Activated T-helper 1 cell treated with anti-CD3 and anti-CD28 coated beads, Interleukin-12 subunit alpha, Interleukin-12 subunit beta, Interleukin-2, Interleukin-4 antibody, amounts not matched to agents 30 ng/mL and 10 ng/mL and 1 ng/mL, durations not matched to agents 14 hours and 24 hours and 36 hours (primary cell): ENCODE measurements at regions of chr2 and their contacts with region 1.

Region 1: GRCh38 chr2:71510196-71510807 is 56.9 kb downstream of the DYSF start:
- DNase-seq: peak; percentile 48
- H3K4me3 Mint-ChIP-seq: no peak overlapping the region
- H3K27ac Mint-ChIP-seq: no peak overlapping the region
- H3K4me1 Mint-ChIP-seq: peaks cover 5% of the 10 kb centered on the region
- H3K27me3 Mint-ChIP-seq: peaks cover 7% of the 10 kb centered on the region

Region 2: GRCh38 chr2:71157124-71157793 is 353.0 kb before region 1 on chr2:
- intact Hi-C with region 1: loop called (anchors 1 kb)
- DNase-seq: peak; percentile 11
- H3K4me3 Mint-ChIP-seq: no peak overlapping the region
- H3K27ac Mint-ChIP-seq: no peak overlapping the region
- H3K4me1 Mint-ChIP-seq: peaks cover 11% of the 10 kb centered on the region
- H3K27me3 Mint-ChIP-seq: peaks cover 6% of the 10 kb centered on the region

Region 3: GRCh38 chr2:71299507-71299906 is 210.8 kb before region 1 on chr2:
- intact Hi-C with region 1: loop called (anchors 1 kb)
- DNase-seq: no peak
- H3K4me3 Mint-ChIP-seq: no peak overlapping the region
- H3K27ac Mint-ChIP-seq: no peak overlapping the region
- H3K4me1 Mint-ChIP-seq: no peaks in the 10 kb centered on the region
- H3K27me3 Mint-ChIP-seq: peaks cover 12% of the 10 kb centered on the region

Region 4: DNA sequence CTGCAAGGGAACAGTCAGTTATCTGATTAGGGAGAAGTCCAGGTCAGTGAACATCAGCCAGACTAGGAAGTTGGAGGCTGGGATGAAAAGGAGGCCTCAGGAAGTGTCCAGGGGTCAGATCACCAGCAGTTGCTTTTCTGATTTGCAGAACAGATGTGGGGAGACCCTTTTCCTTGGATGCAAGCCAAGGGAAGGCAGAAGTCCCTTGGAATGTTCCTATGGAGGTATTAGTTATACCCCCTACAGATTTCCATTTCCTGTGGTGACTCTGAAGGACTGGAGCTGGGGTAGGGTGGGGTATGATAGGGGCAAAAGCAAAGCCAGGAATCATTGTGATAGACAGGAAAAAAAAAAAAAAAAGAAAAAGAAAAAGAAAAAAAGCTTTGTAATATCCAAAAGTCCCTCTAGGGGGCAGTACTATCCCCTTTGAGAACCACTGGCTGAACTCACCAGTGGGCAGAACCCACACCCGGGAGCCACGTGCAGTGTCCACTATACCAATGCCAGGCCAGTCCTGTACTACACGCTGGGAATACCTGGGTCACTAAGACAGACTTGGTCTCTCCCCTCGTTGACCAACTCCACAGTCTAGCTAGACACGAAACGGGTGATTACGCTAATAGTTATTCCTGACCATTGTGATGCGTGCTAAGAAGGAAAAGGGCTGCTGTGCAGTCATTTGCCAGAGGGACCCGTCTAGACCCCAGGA is 49.6 kb before region 1 on chr2:
- intact Hi-C with region 1: loop called (anchors 1 kb)
- DNase-seq: no peak
- H3K4me3 Mint-ChIP-seq: no peak overlapping the region
- H3K27ac Mint-ChIP-seq: no peak overlapping the region
- H3K4me1 Mint-ChIP-seq: peaks cover 8% of the 10 kb centered on the region
- H3K27me3 Mint-ChIP-seq: peaks cover 8% of the 10 kb centered on the region